ENCODE measurements at regions of chr14 and their contacts with region 1.

Region 1: DNA sequence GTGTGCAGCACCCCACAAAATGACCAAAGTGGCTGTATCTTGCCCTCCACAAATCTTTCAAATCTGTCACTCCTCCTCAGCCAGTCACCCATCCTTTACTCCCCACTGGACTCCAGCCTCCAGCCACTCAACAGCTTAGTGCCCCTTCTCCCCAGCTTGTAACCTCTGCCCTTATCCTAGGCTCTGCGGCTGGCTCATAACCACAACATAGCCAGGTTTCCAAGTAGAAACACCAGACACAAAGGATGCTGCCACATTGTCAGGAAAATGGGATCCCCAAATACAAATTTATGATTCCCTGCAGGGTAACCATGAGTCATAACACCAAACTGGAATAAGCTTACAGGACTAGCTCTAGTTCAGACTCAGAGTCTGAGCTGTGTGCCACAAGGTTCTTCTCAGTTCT is 15.1 kb downstream of the OXA1L start:
- DNase-seq: no peak
- H3K4me3 ChIP-seq: no peak overlapping the region
- CTCF ChIP-seq: no peak

Region 2: DNA sequence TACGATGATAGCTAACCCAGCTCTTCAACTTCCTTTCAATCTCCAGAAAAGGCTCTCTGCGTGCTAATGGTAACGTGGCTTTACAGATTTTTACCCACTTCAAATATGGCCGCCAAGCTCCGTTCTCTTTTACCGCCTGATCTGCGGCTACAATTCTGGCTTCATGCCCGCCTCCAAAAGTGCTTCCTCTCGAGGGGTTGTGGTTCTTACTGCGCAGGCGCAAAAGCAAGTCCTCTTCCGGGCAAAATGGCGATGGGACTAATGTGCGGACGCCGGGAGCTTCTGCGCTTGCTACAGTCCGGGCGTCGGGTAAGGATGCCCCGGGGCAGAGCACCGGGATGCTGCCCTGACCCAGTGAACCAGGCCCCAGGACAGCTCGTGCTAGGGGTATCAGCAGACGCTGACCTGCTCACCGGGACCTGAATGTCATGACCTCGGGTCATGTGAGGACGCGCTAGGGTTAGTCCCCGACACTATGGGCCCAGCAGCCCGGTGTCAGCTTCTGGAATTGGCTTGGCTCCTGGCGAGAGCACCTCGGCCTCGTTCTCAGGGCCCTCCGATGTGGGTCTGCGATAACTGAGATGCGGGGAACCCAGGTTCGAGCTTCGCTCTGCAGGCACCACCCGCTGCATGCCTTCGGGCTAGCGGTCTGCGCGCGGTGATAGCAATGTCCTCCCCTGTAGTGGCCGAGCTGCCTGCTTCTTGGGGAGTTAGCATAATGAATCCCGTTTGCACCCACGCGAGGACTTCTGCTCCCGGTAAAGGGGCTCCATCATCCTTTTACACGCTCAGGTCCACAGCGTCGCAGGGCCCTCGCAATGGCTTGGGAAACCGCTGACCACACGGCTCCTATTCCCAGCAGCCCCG is 14.9 kb before region 1 on chr14 and contains the start of gene OXA1L:
- CTCF ChIA-PET with region 1: interaction called, 22 read pairs
- POLR2A ChIA-PET with region 1: no interaction called
- DNase-seq: peak; percentile 86
- H3K4me3 ChIP-seq: peak within 1 kb of the TSS; percentile 99
- CTCF ChIP-seq: no peak

Region 3: GRCh38 chr14:22843123-22843925 is 61.7 kb after region 1 on chr14:
- CTCF ChIA-PET with region 1: no interaction called
- POLR2A ChIA-PET with region 1: no interaction called
- DNase-seq: no peak
- H3K4me3 ChIP-seq: no peak overlapping the region
- CTCF ChIP-seq: no peak